CD4-positive, alpha-beta T cell (primary cell): ENCODE measurements at regions of chr10 and their contacts with region 1.

Region 1: DNA sequence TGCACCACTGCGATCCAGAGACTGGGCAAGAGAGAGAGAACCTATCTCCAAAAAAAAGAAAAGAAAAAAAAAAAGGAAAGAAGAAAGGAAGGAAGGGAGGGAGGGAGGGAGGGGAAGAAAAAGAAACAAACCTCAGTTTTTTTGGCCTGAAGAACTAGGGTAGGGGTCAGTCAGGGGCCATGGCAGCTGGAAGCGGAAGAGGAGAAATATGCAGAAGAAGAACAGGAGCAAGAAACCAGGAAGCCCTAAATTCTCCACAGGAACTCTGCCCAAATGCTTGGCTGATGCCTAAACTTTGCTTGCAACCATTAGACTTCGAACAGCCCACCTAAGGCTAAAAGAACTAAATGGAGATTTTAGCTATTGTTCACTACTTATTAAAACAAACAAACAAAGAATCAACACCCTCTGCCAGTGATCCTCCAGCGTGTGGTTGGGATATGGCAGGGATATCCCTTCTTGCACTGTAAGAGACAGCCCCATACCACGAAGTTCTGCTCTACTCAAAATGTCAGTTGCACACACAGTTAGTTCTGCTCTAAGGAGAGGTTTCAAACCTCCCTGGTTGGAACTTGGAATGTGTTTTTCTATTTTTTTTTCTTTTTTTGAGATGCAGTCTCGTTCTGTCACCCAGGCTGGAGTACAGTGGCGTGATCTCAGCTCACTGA is 139.5 kb downstream of the FAM107B start:
- DNase-seq: no peak
- ATAC-seq: no peak
- H3K4me3 ChIP-seq: no peak overlapping the region
- H3K4me3 Mint-ChIP-seq: no peak overlapping the region
- H3K27ac ChIP-seq: no peak overlapping the region
- H3K27ac Mint-ChIP-seq: no peak overlapping the region
- H3K4me1 ChIP-seq: no peaks in the 10 kb centered on the region
- H3K4me1 Mint-ChIP-seq: peaks cover 5% of the 10 kb centered on the region
- H3K27me3 ChIP-seq: no peaks in the 10 kb centered on the region
- H3K27me3 Mint-ChIP-seq: no peaks in the 10 kb centered on the region
- CTCF ChIP-seq: no peak

Region 2: GRCh38 chr10:14131261-14131960 is 503.8 kb before region 1 on chr10:
- CTCF ChIA-PET with region 1: no interaction called
- POLR2A ChIA-PET with region 1: no interaction called
- intact Hi-C with region 1: no loop called
- DNase-seq: no peak
- ATAC-seq: no peak
- H3K4me3 ChIP-seq: no peak overlapping the region
- H3K4me3 Mint-ChIP-seq: no peak overlapping the region
- H3K27ac ChIP-seq: no peak overlapping the region
- H3K27ac Mint-ChIP-seq: no peak overlapping the region
- H3K4me1 ChIP-seq: no peaks in the 10 kb centered on the region
- H3K4me1 Mint-ChIP-seq: no peaks in the 10 kb centered on the region
- H3K27me3 ChIP-seq: no peaks in the 10 kb centered on the region
- H3K27me3 Mint-ChIP-seq: no peaks in the 10 kb centered on the region
- CTCF ChIP-seq: no peak

Region 3: GRCh38 chr10:14385596-14386593 is 249.3 kb before region 1 on chr10:
- CTCF ChIA-PET with region 1: no interaction called
- POLR2A ChIA-PET with region 1: no interaction called
- intact Hi-C with region 1: no loop called
- DNase-seq: peak in 6 of 14 experiments; percentile 2 to 34 (median 11)
- ATAC-seq: no peak
- H3K4me3 ChIP-seq: no peak overlapping the region
- H3K4me3 Mint-ChIP-seq: no peak overlapping the region
- H3K27ac ChIP-seq: no peak overlapping the region
- H3K27ac Mint-ChIP-seq: no peak overlapping the region
- H3K4me1 ChIP-seq: peaks cover 34% of the 10 kb centered on the region
- H3K4me1 Mint-ChIP-seq: peaks cover 54% of the 10 kb centered on the region
- H3K27me3 ChIP-seq: no peaks in the 10 kb centered on the region
- H3K27me3 Mint-ChIP-seq: no peaks in the 10 kb centered on the region
- CTCF ChIP-seq: no peak

Region 4: GRCh38 chr10:14617852-14618251 is 17.3 kb before region 1 on chr10:
- CTCF ChIA-PET with region 1: interaction called, 4 read pairs
- POLR2A ChIA-PET with region 1: interaction called, 5 read pairs
- intact Hi-C with region 1: loop called in 1 of 2 experiments (anchors 2 kb)
- DNase-seq: peak in 2 of 14 experiments; percentile 47 to 59
- ATAC-seq: no peak
- H3K4me3 ChIP-seq: no peak overlapping the region
- H3K4me3 Mint-ChIP-seq: no peak overlapping the region
- H3K27ac ChIP-seq: no peak overlapping the region
- H3K27ac Mint-ChIP-seq: peak overlapping the region; percentile 43
- H3K4me1 ChIP-seq: peaks cover 14% of the 10 kb centered on the region
- H3K4me1 Mint-ChIP-seq: peaks cover 17% of the 10 kb centered on the region
- H3K27me3 ChIP-seq: no peaks in the 10 kb centered on the region
- H3K27me3 Mint-ChIP-seq: no peaks in the 10 kb centered on the region
- CTCF ChIP-seq: no peak